ENCODE measurements at regions of chr3 and their contacts with region 1.

Region 1: DNA sequence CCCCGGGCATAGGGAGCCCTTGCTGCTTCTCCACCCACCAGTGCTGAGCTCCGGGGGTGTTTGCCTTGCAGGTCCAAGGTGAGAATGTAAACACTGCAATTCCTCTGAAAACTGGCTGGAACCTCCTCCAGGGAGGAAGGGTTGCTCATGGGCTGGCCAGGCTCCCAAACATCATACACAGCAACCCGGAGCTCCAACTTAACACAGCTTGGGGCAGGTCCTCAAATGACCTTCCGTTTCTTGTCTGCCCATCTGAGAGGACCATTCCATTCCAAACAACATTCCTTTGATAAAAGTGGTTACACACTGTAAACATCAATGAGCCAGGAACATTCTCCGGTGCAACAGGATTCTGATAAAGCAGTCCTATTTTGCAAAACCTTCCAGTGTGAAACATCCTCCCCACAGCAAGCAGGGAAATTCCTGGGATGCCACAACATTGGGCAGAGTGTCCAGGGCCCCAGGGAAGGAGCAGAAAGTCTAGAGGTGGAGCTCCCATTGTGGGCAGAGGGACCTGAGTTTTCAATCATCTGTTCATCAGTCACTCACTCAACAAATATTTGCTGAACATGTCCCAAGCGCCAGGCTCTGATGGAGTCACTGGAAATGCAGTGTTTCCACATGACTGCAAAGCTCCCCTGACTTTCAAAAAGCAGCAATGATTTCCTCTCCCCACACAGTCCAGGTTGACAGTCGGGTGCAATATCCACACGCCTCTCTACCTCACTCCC is 7.3 kb upstream of the HEG1 start:
- DNase-seq: peak; percentile 95 to 99
- H3K4me3 ChIP-seq: peak overlapping the region; percentile 8; the same call in 1 of the 2 replicates
- H3K27ac ChIP-seq: peak overlapping the region; percentile 65
- H3K4me1 ChIP-seq: peaks cover 64% of the 10 kb centered on the region
- H3K27me3 ChIP-seq: no peaks in the 10 kb centered on the region
- CTCF ChIP-seq: no peak

Region 2: GRCh38 chr3:124800511-124801258 is 262.4 kb before region 1 on chr3:
- CTCF ChIA-PET with region 1: no interaction called
- POLR2A ChIA-PET with region 1: no interaction called
- intact Hi-C with region 1: no loop called
- DNase-seq: no peak
- H3K4me3 ChIP-seq: no peak overlapping the region
- H3K27ac ChIP-seq: no peak overlapping the region
- H3K4me1 ChIP-seq: no peaks in the 10 kb centered on the region
- H3K27me3 ChIP-seq: no peaks in the 10 kb centered on the region
- CTCF ChIP-seq: no peak

Region 3: GRCh38 chr3:124985358-124985757 is 77.7 kb before region 1 on chr3:
- CTCF ChIA-PET with region 1: no interaction called
- POLR2A ChIA-PET with region 1: no interaction called
- intact Hi-C with region 1: no loop called
- DNase-seq: peak; percentile 29 to 52
- H3K4me3 ChIP-seq: no peak overlapping the region
- H3K27ac ChIP-seq: peak overlapping the region; percentile 83
- H3K4me1 ChIP-seq: peaks cover 28% of the 10 kb centered on the region
- H3K27me3 ChIP-seq: no peaks in the 10 kb centered on the region
- CTCF ChIP-seq: no peak

Region 4: GRCh38 chr3:124995460-124995994 is 67.5 kb before region 1 on chr3:
- CTCF ChIA-PET with region 1: no interaction called
- POLR2A ChIA-PET with region 1: no interaction called
- intact Hi-C with region 1: loop called (anchors 5 kb)
- DNase-seq: peak; percentile 52 to 54
- H3K4me3 ChIP-seq: no peak overlapping the region
- H3K27ac ChIP-seq: no peak overlapping the region
- H3K4me1 ChIP-seq: no peaks in the 10 kb centered on the region
- H3K27me3 ChIP-seq: no peaks in the 10 kb centered on the region
- CTCF ChIP-seq: peak; percentile 80

Region 5: GRCh38 chr3:125110016-125110875 is 47.2 kb after region 1 on chr3:
- CTCF ChIA-PET with region 1: no interaction called
- POLR2A ChIA-PET with region 1: interaction called, 16 read pairs
- intact Hi-C with region 1: loop called (anchors 1 kb)
- DNase-seq: peak; percentile 54 to 69
- H3K4me3 ChIP-seq: no peak overlapping the region
- H3K27ac ChIP-seq: no peak overlapping the region
- H3K4me1 ChIP-seq: peaks cover 36% of the 10 kb centered on the region
- H3K27me3 ChIP-seq: no peaks in the 10 kb centered on the region
- CTCF ChIP-seq: no peak

Region 6: GRCh38 chr3:125129512-125129962 is 66.5 kb after region 1 on chr3:
- CTCF ChIA-PET with region 1: no interaction called
- POLR2A ChIA-PET with region 1: interaction called, 7 read pairs
- intact Hi-C with region 1: loop called (anchors 1 kb)
- DNase-seq: peak; percentile 72 to 81
- H3K4me3 ChIP-seq: no peak overlapping the region
- H3K27ac ChIP-seq: peak overlapping the region; percentile 87
- H3K4me1 ChIP-seq: peaks cover 53% of the 10 kb centered on the region
- H3K27me3 ChIP-seq: no peaks in the 10 kb centered on the region
- CTCF ChIP-seq: no peak

Region 7: GRCh38 chr3:125212509-125213244 is 149.6 kb after region 1 on chr3 and contains the start of gene SLC12A8:
- CTCF ChIA-PET with region 1: no interaction called
- POLR2A ChIA-PET with region 1: no interaction called
- intact Hi-C with region 1: loop called (anchors 5 kb)
- DNase-seq: peak in 1 of 2 experiments; percentile 43
- H3K4me3 ChIP-seq: peak within 1 kb of the TSS; percentile 68
- H3K27ac ChIP-seq: no peak within 1 kb of the TSS
- H3K4me1 ChIP-seq: 0 out of 2 replicates have a peak, but pooled peaks cover 17% of the 10 kb centered on the region
- H3K27me3 ChIP-seq: no peaks in the 10 kb centered on the region
- CTCF ChIP-seq: no peak
- total RNA-seq, gene SLC12A8: 30.7 and 42.9 TPM in 2 replicates

Region 8: DNA sequence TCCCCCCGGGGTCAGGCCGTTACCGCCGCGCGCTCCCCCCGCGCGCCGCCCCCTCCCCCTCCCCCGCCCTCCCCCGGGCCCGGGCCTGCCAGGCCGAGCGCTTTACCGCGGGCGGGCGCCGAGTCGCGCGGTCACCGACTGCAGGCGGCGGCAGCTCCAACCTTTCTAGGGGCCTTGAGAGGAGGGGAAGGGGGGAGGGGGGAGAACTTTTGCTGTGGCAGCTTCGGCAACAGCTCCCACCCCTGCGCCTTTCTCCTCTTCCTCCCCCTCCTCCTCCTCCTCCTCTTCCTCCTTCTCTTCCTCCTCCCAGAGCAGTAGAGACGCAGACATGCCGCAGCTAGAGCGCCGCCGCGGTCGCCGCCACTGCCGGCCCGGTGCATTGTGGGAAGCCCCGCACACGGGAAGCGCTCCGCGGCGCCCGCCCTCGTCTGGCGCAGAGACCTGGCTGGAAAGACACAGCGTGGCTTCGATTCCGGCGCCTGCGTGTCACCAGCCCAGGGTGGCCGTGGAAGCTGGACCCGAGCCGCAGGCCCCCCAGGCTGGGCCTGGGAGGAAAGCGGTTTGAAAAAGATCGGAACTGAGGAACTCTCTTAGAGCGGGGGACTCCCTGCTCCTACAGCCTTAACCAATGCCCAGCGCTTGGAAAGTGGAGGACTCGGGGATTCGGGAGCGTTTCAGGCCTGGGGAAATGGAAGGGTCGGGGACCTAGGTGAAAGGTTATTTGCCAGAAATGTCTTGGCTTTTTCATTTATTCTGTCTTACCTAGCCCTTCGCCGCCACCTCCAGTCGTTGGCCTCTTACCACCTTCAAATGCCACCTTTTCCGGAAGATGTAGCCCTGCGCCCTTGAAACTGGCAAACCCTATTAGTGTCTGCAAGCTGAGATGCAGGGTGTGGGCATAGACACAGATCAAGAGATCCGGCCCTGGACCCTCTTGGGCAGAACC is 312.2 kb after region 1 on chr3 and contains the start of gene ZNF148:
- CTCF ChIA-PET with region 1: no interaction called
- POLR2A ChIA-PET with region 1: interaction called, 8 read pairs
- intact Hi-C with region 1: loop called (anchors 10 kb)
- DNase-seq: peak; percentile 76 to 94
- H3K4me3 ChIP-seq: peak within 1 kb of the TSS; percentile 75
- H3K27ac ChIP-seq: peak within 1 kb of the TSS; percentile 64
- H3K4me1 ChIP-seq: peaks cover 19% of the 10 kb centered on the region
- H3K27me3 ChIP-seq: no peaks in the 10 kb centered on the region
- CTCF ChIP-seq: no peak
- total RNA-seq, gene ZNF148: 53.8 and 62.6 TPM in 2 replicates

Region 9: GRCh38 chr3:126083913-126084767 is 1021.1 kb after region 1 on chr3 and contains the start of gene SLC41A3:
- CTCF ChIA-PET with region 1: no interaction called
- POLR2A ChIA-PET with region 1: no interaction called
- intact Hi-C with region 1: no loop called
- DNase-seq: peak; percentile 66 to 92
- H3K4me3 ChIP-seq: peak within 1 kb of the TSS; percentile 83
- H3K27ac ChIP-seq: no peak within 1 kb of the TSS
- H3K4me1 ChIP-seq: peaks cover 23% of the 10 kb centered on the region
- H3K27me3 ChIP-seq: no peaks in the 10 kb centered on the region
- CTCF ChIP-seq: peak; percentile 58; the same call in 1 of the 2 replicates
- total RNA-seq, gene SLC41A3: 59.2 and 67.0 TPM in 2 replicates

Measured in PC-9 (cell line).